CD4-positive, alpha-beta memory T cell (primary cell): ENCODE measurements at regions of chr19 and their contacts with region 1.

Region 1: DNA sequence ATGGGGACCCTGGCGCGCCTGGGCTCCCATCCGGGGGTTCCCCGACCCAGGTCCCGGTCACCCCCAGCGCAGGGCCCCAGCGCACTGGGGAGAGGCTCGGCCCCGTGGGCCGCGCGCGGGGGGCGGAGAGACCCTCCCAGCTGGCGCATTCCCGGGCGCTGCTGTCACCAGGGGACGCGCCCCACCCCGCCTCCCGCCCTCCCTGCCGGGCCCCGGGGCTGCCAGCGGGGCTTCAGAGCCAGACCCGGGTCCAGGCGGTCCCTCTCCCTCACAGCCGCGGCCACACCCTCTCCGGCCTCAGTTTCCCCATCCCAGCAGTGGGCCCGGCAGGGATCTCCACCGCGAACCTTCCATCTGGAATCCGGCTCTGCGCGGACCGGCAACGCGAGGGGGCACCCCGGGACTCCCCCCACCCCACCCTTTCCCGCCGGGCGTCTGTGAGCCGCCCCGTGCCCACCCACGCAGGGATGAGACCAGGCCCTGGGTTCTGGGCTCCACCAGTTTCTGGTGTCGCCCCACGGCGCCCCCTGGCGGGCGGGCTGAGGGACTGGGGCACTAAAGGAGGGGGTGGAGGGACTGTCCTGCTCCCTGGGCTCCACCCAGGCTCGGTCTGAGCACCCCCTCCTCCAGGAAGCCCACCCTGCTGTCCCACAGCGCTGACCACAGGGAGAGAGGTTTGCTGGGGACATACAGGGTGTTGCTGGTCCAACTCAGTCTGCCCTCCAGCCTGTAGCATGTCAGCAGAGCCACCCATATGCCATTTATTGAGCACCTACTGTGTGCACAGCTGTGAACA is 878 bp upstream of the ADAMTSL5 start:
- DNase-seq: peak; percentile 60 to 69 (median 68)
- H3K4me3 ChIP-seq: no peak overlapping the region
- H3K4me3 Mint-ChIP-seq: peak overlapping the region in 3 of 8 donors; percentile 20 to 41 (median 29)
- H3K27ac ChIP-seq: no peak overlapping the region
- H3K27ac Mint-ChIP-seq: no peak overlapping the region
- H3K4me1 ChIP-seq: peaks cover 13% of the 10 kb centered on the region
- H3K4me1 Mint-ChIP-seq: peaks cover 5 to 19% (median 8%) of the 10 kb centered on the region in 4 donors
- H3K27me3 ChIP-seq: no peaks in the 10 kb centered on the region
- H3K27me3 Mint-ChIP-seq: peaks cover 0 to 12% of the 10 kb centered on the region in 2 donors

Region 2: GRCh38 chr19:1455336-1456120 is 58.2 kb before region 1 on chr19:
- CTCF ChIA-PET with region 1: no interaction called
- POLR2A ChIA-PET with region 1: no interaction called
- intact Hi-C with region 1: no loop called
- DNase-seq: peak; percentile 51 to 70 (median 55)
- H3K4me3 ChIP-seq: no peak overlapping the region
- H3K4me3 Mint-ChIP-seq: peak overlapping the region in 6 of 8 donors; percentile 32 to 61 (median 56)
- H3K27ac ChIP-seq: no peak overlapping the region
- H3K27ac Mint-ChIP-seq: peak overlapping the region in 3 of 7 donors; percentile 62 to 87 (median 74)
- H3K4me1 ChIP-seq: peaks cover 19% of the 10 kb centered on the region
- H3K4me1 Mint-ChIP-seq: peaks cover 6 to 17% (median 12%) of the 10 kb centered on the region in 4 donors
- H3K27me3 ChIP-seq: peaks cover 11% of the 10 kb centered on the region
- H3K27me3 Mint-ChIP-seq: peaks cover 20 to 38% of the 10 kb centered on the region in 2 donors

Region 3: GRCh38 chr19:1470203-1471009 is 43.3 kb before region 1 on chr19:
- CTCF ChIA-PET with region 1: interaction called, 4 read pairs
- POLR2A ChIA-PET with region 1: no interaction called
- intact Hi-C with region 1: loop called (anchors 2 kb)
- DNase-seq: peak; percentile 66 to 80 (median 70)
- H3K4me3 ChIP-seq: peak overlapping the region; percentile 57 to 58
- H3K4me3 Mint-ChIP-seq: peak overlapping the region; percentile 67 to 83 (median 77)
- H3K27ac ChIP-seq: no peak overlapping the region
- H3K27ac Mint-ChIP-seq: peak overlapping the region in 1 of 7 donors; percentile 58
- H3K4me1 ChIP-seq: peaks cover 54% of the 10 kb centered on the region
- H3K4me1 Mint-ChIP-seq: peaks cover 3 to 21% (median 8%) of the 10 kb centered on the region in 4 donors
- H3K27me3 ChIP-seq: no peaks in the 10 kb centered on the region
- H3K27me3 Mint-ChIP-seq: peaks cover 0 to 1% of the 10 kb centered on the region in 2 donors